ENCODE measurements at regions of chr9 and their contacts with region 1.

Region 1: GRCh38 chr9:121322037-121322775 is 47.8 kb downstream of the STOM start:
- H3K4me3 ChIP-seq: no peak overlapping the region
- H3K27ac ChIP-seq: no peak overlapping the region
- H3K4me1 ChIP-seq: no peaks in the 10 kb centered on the region
- CTCF ChIP-seq: no peak

Region 2: DNA sequence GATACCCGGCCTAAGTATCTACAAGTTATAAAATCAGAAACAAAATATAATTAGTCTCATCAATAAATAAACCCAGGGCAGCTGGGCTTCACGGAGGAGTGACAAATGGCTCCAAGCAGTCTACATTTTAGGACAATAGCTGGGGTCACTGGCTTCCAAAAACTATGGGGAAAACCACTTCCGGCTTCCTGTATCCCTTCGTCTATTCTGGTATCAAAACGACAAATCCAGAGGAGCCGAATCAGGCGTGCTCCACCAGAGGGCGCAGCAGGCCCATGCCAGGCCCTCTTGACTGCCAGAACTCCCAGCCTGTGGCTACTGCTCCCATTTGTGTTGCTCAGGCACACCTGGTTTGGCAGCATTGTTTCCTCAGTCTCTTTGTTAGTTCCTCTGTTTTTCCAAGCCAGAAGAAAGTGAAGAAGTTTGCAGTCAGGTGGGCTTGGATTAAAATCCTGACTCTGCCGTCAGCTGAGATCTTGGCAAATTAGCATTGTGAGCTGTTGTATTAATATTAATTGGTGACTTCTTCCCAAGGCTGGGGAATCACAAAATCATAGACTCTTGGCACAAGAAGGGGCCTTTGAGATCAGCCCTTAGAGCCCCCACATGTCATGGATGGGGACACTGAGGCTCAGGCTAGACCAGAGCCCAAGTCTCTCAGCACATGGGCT is 108.9 kb before region 1 on chr9:
- CTCF ChIA-PET with region 1: interaction called, 106 read pairs
- POLR2A ChIA-PET with region 1: no interaction called
- H3K4me3 ChIP-seq: no peak overlapping the region
- H3K27ac ChIP-seq: no peak overlapping the region
- H3K4me1 ChIP-seq: no peaks in the 10 kb centered on the region
- CTCF ChIP-seq: peak; percentile 44; the same call in 1 of the 2 replicates

Region 3: GRCh38 chr9:121259498-121259897 is 62.7 kb before region 1 on chr9:
- CTCF ChIA-PET with region 1: no interaction called
- POLR2A ChIA-PET with region 1: no interaction called
- H3K4me3 ChIP-seq: no peak overlapping the region
- H3K27ac ChIP-seq: no peak overlapping the region
- H3K4me1 ChIP-seq: no peaks in the 10 kb centered on the region
- CTCF ChIP-seq: no peak

Region 4: DNA sequence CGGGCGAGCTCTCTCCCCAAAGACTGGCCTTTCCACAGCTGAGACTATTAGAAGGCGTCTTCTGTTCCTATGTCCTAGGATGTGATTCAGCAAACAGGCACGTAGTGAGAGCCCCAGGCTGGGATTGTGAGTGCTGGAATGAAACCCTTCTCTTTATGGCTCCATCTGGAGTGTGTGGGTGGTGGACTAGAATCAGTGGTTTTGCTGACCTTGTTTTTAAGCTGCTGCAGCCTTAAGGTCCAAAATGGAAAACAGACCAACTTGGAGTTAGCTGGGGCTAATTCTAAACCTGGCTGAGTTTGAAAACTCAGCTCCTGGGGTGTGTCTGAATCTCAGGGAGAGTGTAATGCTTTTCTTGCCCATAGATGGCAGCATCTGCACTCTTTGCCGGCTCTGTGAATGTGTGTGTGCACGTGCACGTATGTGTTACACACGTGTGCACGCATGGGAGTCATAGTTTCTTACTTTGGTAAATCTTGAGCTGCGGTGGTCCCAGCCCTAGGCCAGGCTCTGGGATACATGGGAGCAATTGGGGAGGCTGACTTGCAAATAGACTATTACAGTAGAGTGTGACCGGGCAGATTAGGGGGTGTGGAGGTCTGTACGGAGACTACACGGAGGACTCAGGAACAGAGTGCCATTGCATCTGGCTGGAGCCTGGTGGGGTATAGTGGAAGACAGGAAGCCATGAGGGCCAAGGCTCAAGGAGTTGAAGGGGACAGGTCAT is 43.5 kb before region 1 on chr9:
- CTCF ChIA-PET with region 1: interaction called, 82 read pairs
- POLR2A ChIA-PET with region 1: interaction called, 3 read pairs
- H3K4me3 ChIP-seq: no peak overlapping the region
- H3K27ac ChIP-seq: no peak overlapping the region
- H3K4me1 ChIP-seq: peaks cover 3% of the 10 kb centered on the region; the same call in 1 of the 2 replicates
- CTCF ChIP-seq: peak; percentile 56

Region 5: GRCh38 chr9:121340676-121341392 is 18.6 kb after region 1 on chr9:
- CTCF ChIA-PET with region 1: interaction called, 44 read pairs
- POLR2A ChIA-PET with region 1: no interaction called
- H3K4me3 ChIP-seq: no peak overlapping the region
- H3K27ac ChIP-seq: no peak overlapping the region
- H3K4me1 ChIP-seq: no peaks in the 10 kb centered on the region
- CTCF ChIP-seq: no peak

Region 6: DNA sequence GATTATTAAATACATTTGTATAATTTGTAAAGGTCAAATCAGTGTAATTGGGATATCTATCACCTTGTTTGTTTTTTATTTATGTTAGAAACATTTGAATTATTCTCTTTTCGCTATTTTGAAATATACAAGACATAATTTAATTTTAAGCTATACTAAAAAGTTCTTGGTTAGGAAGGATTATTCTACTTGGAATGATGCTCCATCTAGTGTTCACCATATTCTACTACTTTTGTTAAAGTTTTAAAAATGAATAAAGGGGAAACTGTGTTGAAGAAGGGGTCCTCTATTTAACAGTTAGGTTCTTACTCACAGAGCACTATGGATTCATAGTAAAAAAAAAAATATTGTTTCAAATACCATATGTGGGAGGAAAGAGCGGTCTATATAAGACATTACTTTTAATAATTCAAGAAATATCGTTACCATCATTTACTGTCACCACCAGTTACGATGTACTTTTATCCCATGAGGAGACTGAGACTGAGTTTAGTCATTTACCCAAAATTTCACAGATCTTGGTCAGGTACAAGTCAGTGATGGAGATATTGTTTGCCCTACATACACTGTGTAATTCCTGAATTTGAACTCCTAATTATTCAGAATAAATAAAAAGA is 54.1 kb after region 1 on chr9:
- CTCF ChIA-PET with region 1: interaction called, 110 read pairs
- POLR2A ChIA-PET with region 1: no interaction called
- H3K4me3 ChIP-seq: no peak overlapping the region
- H3K27ac ChIP-seq: no peak overlapping the region
- H3K4me1 ChIP-seq: no peaks in the 10 kb centered on the region
- CTCF ChIP-seq: no peak

Region 7: GRCh38 chr9:121399883-121400607 is 77.8 kb after region 1 on chr9:
- CTCF ChIA-PET with region 1: interaction called, 236 read pairs
- POLR2A ChIA-PET with region 1: interaction called, 3 read pairs
- H3K4me3 ChIP-seq: no peak overlapping the region
- H3K27ac ChIP-seq: no peak overlapping the region
- H3K4me1 ChIP-seq: no peaks in the 10 kb centered on the region
- CTCF ChIP-seq: no peak

Region 8: GRCh38 chr9:121756474-121757280 is 434.5 kb after region 1 on chr9:
- CTCF ChIA-PET with region 1: no interaction called
- POLR2A ChIA-PET with region 1: no interaction called
- H3K4me3 ChIP-seq: no peak overlapping the region
- H3K27ac ChIP-seq: no peak overlapping the region
- H3K4me1 ChIP-seq: no peaks in the 10 kb centered on the region
- CTCF ChIP-seq: no peak